Heart left ventricle (tissue), 16 donors: ENCODE measurements at regions of chr9 and their contacts with region 1.

Region 1: GRCh38 chr9:96667361-96667728 is 12.2 kb upstream of the PRXL2C start:
- DNase-seq: no peak
- ATAC-seq: no peak
- H3K4me3 ChIP-seq: no peak overlapping the region
- H3K27ac ChIP-seq: no peak overlapping the region
- H3K4me1 ChIP-seq: peaks cover 0 to 5% (median 0%) of the 10 kb centered on the region in 12 donors
- H3K27me3 ChIP-seq: no peaks in the 10 kb centered on the region
- CTCF ChIP-seq: no peak
- POLR2A ChIP-seq: no peak

Region 2: DNA sequence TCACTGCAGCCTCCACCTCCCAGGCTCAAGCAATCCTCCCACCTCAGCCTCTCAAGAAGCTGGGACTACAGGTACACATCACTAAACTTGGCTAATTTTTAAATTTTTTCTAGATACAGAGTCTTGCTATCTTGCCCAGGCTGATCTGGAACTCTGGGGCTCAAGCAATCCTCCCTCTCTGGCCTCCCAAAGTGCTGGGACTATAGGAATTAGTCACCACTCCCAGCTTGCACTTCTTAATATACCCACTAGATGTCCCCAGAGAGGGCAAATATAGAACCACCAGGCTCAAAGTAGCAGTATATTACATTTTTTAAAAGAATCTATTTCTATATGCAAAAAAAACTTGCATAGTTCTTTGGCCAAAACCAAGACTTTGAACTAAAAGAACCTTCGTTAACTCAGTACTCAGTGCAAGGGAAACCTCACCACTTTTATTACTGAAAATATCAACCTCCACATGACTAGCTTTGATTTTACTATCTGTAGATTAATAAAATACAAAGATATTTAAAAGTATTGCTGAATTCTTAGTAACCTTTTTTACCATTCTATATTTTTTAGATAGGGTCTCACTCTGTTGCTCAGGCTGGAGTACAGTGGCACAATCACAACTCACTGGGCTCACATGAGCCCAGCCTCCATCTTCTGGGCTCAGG is 339.5 kb before region 1 on chr9:
- intact Hi-C with region 1: loop called (anchors 2 to 5 kb)
- DNase-seq: peak in 1 of 5 donors; percentile 24
- ATAC-seq: peak; percentile 40 to 83 (median 68)
- H3K4me3 ChIP-seq: no peak overlapping the region
- H3K27ac ChIP-seq: no peak overlapping the region
- H3K4me1 ChIP-seq: peaks cover 0 to 5% (median 0%) of the 10 kb centered on the region in 12 donors
- H3K27me3 ChIP-seq: no peaks in the 10 kb centered on the region
- CTCF ChIP-seq: peak; percentile 77 to 89 (median 85)
- POLR2A ChIP-seq: no peak

Region 3: GRCh38 chr9:96441798-96442445 is 225.4 kb before region 1 on chr9:
- intact Hi-C with region 1: loop called in 5 of 10 experiments (anchors 5 to 10 kb)
- DNase-seq: no peak
- ATAC-seq: no peak
- H3K4me3 ChIP-seq: no peak overlapping the region
- H3K27ac ChIP-seq: no peak overlapping the region
- H3K4me1 ChIP-seq: no peaks in the 10 kb centered on the region
- H3K27me3 ChIP-seq: no peaks in the 10 kb centered on the region
- CTCF ChIP-seq: peak in 11 of 12 donors; percentile 18 to 49 (median 42)
- POLR2A ChIP-seq: no peak